ENCODE measurements at regions of chr12 and their contacts with region 1.

Region 1: DNA sequence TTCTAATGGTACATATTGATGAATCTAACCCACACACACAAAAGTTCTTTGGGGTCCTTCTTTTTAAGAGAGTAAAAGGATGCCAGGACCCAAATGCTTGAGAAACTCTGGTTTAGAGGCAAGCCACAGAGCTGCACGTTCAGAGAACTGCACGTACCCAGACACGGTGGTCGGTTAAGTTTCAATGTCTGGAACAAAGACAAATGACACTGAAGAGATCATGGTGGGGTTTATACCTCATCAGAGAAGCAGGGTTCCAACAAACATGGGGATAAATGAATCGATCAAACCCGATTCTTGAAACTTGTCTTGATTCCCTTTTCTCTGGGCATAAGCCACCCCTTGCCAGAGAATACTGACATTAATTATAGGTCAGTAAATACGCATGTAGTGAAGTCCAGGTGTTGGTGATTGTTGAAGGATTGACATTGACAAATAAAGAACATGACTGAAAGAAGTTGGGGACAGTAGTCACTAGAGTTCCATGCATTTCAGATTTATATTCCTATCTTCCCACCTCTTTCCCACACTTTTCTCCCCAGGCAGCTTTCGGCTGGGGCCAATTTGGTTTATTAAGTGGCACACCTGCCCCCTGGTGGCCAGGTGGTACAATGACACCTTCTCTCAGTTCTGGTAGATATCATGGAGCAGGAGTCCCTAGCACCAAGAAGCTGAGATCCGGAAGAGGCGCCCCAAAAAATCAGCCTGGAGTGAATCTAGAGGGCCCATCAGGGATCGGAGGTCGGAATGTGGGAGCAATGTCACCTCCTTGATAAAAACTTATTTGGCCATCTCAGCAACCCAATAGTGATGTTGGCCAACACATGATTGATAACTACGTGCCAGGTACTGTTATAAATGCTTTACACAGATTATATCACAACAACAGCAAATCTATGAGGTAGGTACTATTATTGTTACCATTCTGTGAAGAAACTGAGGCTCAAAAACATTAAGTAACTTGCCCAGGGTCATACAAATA is 17.8 kb upstream of the HDAC7 start:
- DNase-seq: peak; percentile 77
- ATAC-seq: peak; percentile 23
- H3K4me3 Mint-ChIP-seq: peak overlapping the region; percentile 44
- H3K27ac Mint-ChIP-seq: peak overlapping the region; percentile 68
- H3K4me1 Mint-ChIP-seq: peaks cover 61% of the 10 kb centered on the region
- H3K27me3 Mint-ChIP-seq: peaks cover 2% of the 10 kb centered on the region

Region 2: GRCh38 chr12:47742253-47742825 is 95.1 kb before region 1 on chr12:
- CTCF ChIA-PET with region 1: interaction called, 360 read pairs
- POLR2A ChIA-PET with region 1: interaction called, 6 read pairs
- DNase-seq: peak; percentile 82
- ATAC-seq: peak; percentile 55
- H3K4me3 Mint-ChIP-seq: no peak overlapping the region
- H3K27ac Mint-ChIP-seq: no peak overlapping the region
- H3K4me1 Mint-ChIP-seq: peaks cover 26% of the 10 kb centered on the region
- H3K27me3 Mint-ChIP-seq: peaks cover 19% of the 10 kb centered on the region

Region 3: DNA sequence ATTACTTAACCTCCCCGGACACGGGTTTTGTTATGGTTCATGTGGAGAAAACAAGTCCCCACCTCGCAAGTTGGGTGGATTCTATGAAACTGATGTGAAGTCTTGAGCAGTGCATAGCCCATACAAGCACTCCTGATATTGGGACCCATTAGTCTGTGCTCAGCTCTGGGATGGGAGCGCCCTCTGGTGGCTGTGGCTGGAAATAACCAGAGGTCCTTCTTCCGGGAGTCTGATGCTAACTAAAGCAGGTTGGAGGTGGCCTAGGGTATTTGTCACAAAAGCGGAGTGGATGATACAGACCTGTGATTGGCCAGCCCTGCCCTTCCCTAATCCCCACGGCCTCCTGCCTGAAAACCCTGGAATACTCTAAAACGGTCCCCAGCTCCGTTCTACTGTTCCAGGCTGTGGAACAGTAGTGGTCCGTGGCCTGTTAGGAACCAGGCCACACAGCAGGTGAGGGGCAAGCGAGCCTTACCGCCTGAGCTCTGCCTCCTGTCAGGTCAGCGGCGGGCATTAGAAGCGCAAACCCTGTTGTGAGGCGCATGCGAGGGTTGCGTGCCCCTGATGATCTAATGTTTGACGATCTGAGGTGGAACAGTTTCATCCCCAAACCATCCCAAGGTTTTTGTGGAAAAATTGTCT is 58.1 kb before region 1 on chr12:
- CTCF ChIA-PET with region 1: interaction called, 144 read pairs
- POLR2A ChIA-PET with region 1: interaction called, 4 read pairs
- DNase-seq: peak; percentile 94
- ATAC-seq: peak; percentile 91
- H3K4me3 Mint-ChIP-seq: no peak overlapping the region
- H3K27ac Mint-ChIP-seq: peak overlapping the region; percentile 47
- H3K4me1 Mint-ChIP-seq: peaks cover 44% of the 10 kb centered on the region
- H3K27me3 Mint-ChIP-seq: no peaks in the 10 kb centered on the region

Region 4: DNA sequence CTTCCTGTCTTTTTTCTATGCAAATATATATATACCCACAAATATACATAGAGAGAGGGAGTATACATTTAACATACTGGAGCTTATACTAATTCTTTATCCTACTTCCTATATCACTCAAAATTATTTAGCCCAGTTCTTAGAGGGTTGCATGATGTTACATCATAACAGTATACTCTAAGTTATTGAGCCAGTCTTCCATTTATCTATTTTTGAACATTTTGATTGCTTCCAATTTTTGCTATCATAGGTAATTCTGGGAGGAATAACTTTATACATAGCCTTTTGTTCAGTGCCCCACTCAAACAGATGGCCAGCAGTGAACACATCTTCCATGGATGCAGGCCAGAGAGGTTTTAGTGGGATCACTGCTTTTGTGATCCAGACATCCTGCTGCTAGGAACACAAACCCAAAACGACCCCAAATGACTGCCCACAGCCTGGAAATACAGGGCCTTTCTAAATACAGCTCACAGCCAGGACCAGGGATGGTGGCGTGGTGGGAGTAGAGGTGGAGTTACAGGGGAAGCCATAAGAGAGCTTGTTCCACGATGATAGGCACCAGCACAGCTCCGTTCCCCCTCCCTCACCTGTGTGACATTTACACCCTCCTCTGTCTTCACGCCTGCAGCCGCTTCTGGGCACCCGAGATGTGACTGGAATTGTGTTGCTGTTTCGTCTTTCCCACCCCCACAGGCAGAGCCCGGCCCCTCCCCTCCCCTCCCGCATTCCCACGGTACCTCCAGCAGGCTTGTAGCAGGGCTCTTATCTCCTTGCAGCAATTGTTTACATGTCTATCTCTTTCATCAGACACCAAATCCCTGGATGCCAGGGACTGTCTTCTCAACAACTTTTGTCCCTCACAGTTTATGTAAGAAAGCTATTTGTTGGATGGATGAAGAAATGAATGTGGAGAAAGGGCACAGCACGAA is 12.9 kb after region 1 on chr12:
- CTCF ChIA-PET with region 1: interaction called, 27 read pairs
- POLR2A ChIA-PET with region 1: no interaction called
- DNase-seq: no peak
- ATAC-seq: no peak
- H3K4me3 Mint-ChIP-seq: no peak overlapping the region
- H3K27ac Mint-ChIP-seq: no peak overlapping the region
- H3K4me1 Mint-ChIP-seq: no peaks in the 10 kb centered on the region
- H3K27me3 Mint-ChIP-seq: no peaks in the 10 kb centered on the region

Region 5: GRCh38 chr12:47904713-47905310 is 67.3 kb after region 1 on chr12 and contains the start of gene VDR:
- CTCF ChIA-PET with region 1: interaction called, 11 read pairs
- POLR2A ChIA-PET with region 1: no interaction called
- DNase-seq: peak; percentile 75
- ATAC-seq: peak; percentile 77
- H3K4me3 Mint-ChIP-seq: peak within 1 kb of the TSS; percentile 81
- H3K27ac Mint-ChIP-seq: peak within 1 kb of the TSS; percentile 69
- H3K4me1 Mint-ChIP-seq: peaks cover 52% of the 10 kb centered on the region
- H3K27me3 Mint-ChIP-seq: peaks cover 30% of the 10 kb centered on the region
- total RNA-seq, gene VDR: 13.2 to 14.5 TPM